Ascending aorta (tissue), 2 donors: ENCODE measurements at regions of chr4 and their contacts with region 1.

Region 1: DNA sequence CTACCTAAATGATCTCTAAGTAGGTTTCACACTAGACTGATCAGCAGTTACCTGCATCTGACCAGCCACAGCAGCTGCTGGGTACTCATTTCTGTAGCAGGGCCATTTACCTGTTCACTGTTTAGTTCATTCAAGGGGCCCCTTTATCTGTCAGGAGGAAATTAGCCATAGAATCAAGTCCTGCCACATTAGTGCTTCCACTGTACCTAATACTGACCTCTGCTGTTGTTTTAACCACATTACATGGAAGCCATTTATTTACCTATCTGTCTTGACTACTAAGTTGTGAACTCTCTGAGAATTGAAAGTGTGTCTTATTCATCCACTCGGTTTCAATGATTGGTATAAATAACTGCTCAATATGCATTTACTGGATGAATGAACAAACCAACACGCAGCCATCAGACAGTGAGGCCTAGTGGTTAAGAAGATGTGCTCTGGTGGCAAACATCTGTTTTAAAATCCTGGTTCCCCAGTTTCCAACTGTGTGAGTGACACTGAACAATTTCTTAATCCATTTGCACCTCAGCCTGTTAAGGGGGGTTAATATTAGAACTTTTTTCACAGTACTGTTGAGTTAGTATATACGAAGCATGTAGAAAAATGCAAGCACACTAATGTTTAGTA is 30.0 kb upstream of the ANXA5 start:
- DNase-seq: no peak
- H3K4me3 ChIP-seq: no peak overlapping the region
- H3K27ac ChIP-seq: no peak overlapping the region
- H3K4me1 ChIP-seq: no peaks in the 10 kb centered on the region
- H3K27me3 ChIP-seq: no peaks in the 10 kb centered on the region
- CTCF ChIP-seq: peak; percentile 55 to 67 (median 60)

Region 2: DNA sequence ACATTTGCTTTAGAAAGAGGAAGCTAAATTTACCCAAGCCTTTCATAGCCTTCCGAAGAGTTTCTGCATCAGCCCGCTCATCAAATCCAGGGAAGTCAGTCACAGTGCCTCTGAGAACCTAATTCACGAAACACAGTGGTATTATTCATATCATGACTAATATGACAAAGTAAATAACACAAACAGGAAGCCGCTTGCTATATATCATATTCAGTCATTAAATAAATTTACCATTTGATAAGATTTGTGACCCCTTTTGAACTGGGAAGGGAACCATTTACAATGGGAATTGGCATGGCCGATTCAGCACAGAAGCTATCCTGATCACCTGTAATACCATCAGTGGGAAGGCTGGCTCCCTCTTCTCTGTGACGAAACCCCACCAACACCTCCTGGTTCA is 40.5 kb before region 1 on chr4:
- intact Hi-C with region 1: loop called (anchors 5 kb)
- DNase-seq: no peak
- H3K4me3 ChIP-seq: no peak overlapping the region
- H3K27ac ChIP-seq: no peak overlapping the region
- H3K4me1 ChIP-seq: peaks cover 6 to 24% of the 10 kb centered on the region in 2 donors
- H3K27me3 ChIP-seq: no peaks in the 10 kb centered on the region
- CTCF ChIP-seq: no peak